ENCODE measurements at regions of chr1 and their contacts with region 1.

Region 1: GRCh38 chr1:246497331-246497915 is 9.7 kb downstream of the SMYD3 start:
- DNase-seq: no peak
- H3K4me3 ChIP-seq: no peak overlapping the region
- CTCF ChIP-seq: peak; percentile 52

Region 2: DNA sequence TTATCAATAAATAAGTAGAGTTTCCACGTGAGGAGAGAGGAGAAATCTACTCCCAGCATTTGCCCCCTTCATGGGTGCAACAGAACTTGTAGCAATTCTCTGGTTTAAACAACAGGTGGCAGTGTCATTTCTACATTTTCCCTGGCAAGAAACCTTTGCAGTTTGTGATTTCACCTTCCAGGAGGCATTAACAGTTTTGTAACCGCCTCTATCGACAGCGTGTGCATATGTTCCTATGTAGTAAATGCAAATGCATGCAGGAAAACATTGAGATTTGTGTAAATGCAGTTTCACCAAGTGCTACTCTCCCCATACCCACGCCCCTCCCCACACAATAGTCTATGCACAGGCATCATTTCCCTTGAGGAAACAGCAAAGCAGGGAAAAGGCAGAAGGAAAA is 485.1 kb before region 1 on chr1:
- CTCF ChIA-PET with region 1: interaction called, 23 read pairs
- POLR2A ChIA-PET with region 1: no interaction called
- DNase-seq: no peak
- H3K4me3 ChIP-seq: no peak overlapping the region
- CTCF ChIP-seq: peak; percentile 54

Region 3: GRCh38 chr1:246482805-246483568 is 14.4 kb before region 1 on chr1:
- CTCF ChIA-PET with region 1: interaction called, 15 read pairs
- POLR2A ChIA-PET with region 1: no interaction called
- DNase-seq: no peak
- H3K4me3 ChIP-seq: no peak overlapping the region
- CTCF ChIP-seq: no peak

Region 4: DNA sequence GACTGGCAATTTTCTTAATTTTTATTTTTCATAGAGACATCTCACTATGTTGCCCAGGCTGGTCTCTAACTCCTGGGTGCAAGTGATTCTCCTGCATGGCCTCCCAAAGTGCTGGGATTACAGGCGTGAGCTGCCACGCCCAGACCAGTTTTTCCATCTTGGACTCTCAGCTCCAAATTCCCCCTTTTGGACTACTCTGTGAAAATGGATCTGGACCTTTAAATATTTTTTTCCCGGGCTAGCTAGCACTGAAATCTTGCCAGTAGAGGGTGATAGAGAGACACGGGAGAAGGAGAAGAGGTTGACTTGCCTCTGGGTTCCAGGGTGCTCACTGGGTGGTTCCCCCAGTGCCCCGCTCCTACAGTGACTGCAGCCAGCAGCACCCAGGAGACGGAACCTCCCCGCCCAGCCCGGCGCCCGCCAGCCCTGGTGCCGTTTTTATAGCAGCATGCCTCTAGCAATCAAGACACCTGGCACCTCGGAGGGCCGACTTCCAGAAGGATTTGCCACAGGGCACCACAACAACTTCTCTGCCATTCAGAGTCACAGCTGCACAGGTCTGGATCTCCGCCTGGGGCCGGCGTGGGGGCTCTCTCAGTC is 192.1 kb after region 1 on chr1:
- CTCF ChIA-PET with region 1: interaction called, 13 read pairs
- POLR2A ChIA-PET with region 1: no interaction called
- DNase-seq: no peak
- H3K4me3 ChIP-seq: peak overlapping the region; percentile 50
- CTCF ChIP-seq: peak; percentile 73

Region 5: DNA sequence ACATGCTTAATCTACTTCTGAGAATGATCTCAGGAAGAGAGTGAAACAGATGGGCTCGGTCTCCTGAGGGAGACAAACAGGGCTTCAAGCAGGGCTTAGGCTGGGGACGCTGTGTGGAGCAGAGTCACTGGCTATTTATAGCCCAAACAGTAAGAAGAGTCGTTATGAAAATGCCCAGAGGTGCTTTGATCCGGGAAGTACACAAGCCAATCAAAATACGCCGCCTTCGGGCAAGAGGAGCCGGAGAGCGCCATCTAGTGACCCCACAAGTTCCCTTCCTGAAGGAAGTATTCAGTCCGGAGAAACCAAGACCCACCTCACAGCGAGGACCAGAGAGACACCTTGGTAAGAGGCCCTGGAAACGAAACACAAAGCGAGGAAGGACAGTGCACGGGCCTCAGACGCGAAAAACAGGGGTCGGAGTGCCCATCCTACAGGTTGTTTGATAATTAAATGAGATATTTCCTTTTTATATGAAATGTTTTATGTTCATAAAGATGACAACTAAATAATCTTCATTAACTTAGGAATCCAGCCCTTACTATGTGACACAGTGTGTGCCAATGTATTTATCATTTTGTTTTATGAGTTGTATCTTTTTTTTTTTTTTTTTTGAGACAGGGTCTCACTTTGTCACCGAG is 201.8 kb after region 1 on chr1:
- CTCF ChIA-PET with region 1: interaction called, 14 read pairs
- POLR2A ChIA-PET with region 1: no interaction called
- DNase-seq: peak; percentile 89
- H3K4me3 ChIP-seq: peak overlapping the region; percentile 36
- CTCF ChIP-seq: peak; percentile 75

Region 6: DNA sequence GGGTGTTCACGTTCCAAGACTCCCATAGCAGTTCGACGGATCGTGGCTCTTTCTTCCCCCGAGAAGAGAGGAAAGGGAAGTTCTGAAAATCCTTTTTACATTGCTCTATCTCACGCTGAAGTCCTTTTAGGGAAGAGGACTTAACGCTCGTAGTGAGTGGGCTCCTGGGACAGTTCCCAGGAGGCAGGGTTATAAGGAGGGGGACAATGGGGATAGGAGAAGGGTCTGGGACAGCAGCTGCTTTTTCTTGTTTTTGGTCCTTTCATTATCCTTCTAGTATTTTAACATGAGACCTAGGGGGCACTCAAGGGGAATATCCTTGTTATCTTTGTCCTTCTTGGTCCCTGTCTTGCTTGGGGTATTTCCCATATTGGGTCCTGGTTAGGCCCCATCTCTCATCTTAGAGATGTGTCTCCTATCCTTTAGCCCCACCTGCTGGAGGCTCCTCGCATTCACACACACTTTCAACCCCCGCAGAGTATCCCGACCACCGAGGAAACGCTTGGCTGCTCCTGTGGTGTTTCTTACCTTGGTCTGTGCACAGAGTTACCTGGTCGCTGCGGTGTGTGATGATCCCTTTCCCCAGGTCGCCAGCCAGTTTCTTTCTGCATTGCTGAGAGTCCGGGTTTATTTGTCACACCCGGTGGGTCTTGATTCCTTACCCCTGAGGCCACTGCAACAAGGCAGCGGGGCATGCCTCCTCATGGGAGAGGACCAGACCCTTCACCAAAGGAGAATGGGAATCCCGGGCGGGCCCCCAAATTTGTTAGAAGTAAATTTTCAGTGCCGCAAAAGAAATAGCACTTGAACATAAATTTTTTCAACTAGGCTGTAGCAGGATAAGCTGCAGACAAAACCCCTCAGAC is 256.5 kb after region 1 on chr1:
- CTCF ChIA-PET with region 1: interaction called, 21 read pairs
- POLR2A ChIA-PET with region 1: no interaction called
- DNase-seq: no peak
- H3K4me3 ChIP-seq: no peak overlapping the region
- CTCF ChIP-seq: peak; percentile 80